ENCODE measurements at regions of chr1 and their contacts with region 1.

Region 1: GRCh38 chr1:47725992-47726855 is 271.0 kb downstream of the TRABD2B start:
- DNase-seq: peak; percentile 34
- H3K4me3 Mint-ChIP-seq: no peak overlapping the region
- H3K27ac Mint-ChIP-seq: no peak overlapping the region
- H3K4me1 Mint-ChIP-seq: peaks cover 5% of the 10 kb centered on the region
- H3K27me3 Mint-ChIP-seq: peaks cover 46% of the 10 kb centered on the region

Region 2: DNA sequence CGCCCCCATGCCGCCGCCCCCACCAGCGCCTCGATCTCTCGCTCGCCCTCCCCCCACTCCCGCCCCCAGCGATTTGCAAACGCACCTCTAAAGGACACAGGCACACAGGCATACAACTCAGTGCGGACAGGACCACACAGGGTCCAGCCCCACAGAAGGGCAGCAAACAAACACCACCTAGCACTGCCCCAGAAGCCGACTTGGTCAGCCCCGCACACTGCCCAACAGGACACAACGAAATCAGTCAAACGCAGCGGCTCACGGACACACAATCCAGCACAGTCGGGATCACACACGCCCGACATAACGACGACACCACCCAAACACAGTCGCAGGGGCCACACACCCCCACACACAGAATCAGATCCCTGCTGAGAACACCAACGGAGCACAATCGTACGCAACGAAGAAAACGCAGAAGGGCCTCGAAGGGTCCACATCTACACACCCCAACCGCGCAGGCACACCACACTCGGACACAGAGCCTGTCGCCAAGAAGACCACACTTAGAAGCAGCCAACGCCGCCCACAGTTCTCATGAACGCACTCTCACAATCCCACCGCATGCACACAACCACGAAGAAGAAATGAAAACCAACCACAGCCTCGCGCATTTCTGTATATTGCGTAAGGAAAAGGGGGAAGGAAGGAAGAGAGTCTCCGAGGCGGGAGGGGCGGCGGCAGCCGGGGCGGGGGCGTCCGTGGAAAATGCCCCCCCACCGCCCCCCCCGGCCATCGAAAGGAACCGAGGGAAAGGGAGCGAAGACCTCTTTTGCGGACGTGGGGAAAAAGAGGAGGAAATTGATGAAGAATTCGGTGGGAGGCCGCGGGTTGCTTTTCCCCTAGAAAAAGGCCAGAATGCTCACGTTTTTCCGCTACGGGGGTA is 494.7 kb before region 1 on chr1:
- intact Hi-C with region 1: loop called (anchors 5 kb)
- DNase-seq: no peak
- H3K4me3 Mint-ChIP-seq: peak overlapping the region; percentile 73
- H3K27ac Mint-ChIP-seq: peak overlapping the region; percentile 86
- H3K4me1 Mint-ChIP-seq: peaks cover 14% of the 10 kb centered on the region
- H3K27me3 Mint-ChIP-seq: peaks cover 87% of the 10 kb centered on the region

Region 3: DNA sequence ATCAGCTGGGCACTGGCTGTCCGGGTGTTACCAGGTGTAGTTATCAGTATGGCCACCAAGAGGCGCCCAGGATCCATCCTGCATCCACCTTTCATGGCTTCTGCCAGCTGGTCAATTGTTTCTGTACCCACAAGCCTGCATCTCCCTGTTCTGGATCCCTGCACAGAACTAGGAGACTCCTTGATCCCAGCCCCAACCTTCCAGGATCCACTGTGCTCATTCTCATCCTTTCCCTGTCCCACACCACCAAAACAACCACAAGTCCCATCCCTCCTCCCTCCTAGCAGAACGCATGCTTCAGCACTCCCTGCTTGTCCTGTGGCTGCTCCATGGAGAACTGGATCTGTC is 337.4 kb before region 1 on chr1:
- intact Hi-C with region 1: loop called (anchors 1 kb)
- DNase-seq: peak; percentile 22
- H3K4me3 Mint-ChIP-seq: no peak overlapping the region
- H3K27ac Mint-ChIP-seq: no peak overlapping the region
- H3K4me1 Mint-ChIP-seq: no peaks in the 10 kb centered on the region
- H3K27me3 Mint-ChIP-seq: peaks cover 22% of the 10 kb centered on the region

Region 4: DNA sequence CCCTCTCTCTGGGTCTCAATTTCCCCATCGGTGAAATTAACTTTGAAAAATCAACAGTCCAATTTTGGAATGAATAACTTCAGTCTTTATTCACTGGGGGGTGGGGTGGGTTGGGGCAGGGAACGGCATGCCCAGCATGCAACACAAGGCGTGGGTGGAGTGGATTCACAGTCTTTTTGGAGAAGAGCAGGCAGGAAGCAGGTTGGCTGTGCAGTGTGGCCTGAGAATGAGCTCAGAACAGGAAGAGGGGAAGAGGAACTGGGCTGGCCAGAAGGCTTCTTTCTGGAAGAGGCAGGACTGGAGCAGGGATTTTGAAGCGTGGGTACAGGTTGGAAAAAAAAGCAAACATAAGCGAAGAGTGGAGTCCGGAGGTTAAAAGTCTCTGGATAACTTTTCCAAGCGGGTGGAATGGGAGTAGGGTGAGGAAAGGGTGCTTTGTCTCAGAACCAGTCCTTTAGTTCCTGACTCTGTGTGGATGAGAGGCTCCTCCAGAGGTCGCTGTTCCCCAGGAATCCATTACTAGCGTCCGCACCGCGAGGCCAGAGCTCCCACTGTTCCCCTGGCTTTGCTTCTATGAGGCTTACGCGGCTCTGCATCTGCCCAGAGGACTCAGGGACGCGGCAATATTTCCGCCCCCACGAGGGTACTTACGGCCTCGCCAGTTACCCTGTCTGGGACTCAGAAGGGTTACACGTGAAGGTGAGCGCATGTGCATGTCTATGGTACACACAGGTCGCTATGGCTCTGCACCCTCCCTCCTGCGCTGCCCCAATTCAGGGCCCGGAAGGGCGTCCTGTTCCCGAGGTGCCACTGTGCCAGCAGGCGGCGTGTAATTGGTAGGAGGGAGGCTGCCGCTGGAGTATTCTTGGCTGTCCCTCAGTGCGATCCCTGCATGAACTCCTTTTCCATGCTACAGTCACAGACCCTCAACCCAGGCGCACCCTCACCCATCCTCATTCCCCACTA is 293.9 kb before region 1 on chr1:
- intact Hi-C with region 1: loop called (anchors 1 kb)
- DNase-seq: peak; percentile 28
- H3K4me3 Mint-ChIP-seq: no peak overlapping the region
- H3K27ac Mint-ChIP-seq: no peak overlapping the region
- H3K4me1 Mint-ChIP-seq: peaks cover 34% of the 10 kb centered on the region
- H3K27me3 Mint-ChIP-seq: peaks cover 36% of the 10 kb centered on the region

Region 5: DNA sequence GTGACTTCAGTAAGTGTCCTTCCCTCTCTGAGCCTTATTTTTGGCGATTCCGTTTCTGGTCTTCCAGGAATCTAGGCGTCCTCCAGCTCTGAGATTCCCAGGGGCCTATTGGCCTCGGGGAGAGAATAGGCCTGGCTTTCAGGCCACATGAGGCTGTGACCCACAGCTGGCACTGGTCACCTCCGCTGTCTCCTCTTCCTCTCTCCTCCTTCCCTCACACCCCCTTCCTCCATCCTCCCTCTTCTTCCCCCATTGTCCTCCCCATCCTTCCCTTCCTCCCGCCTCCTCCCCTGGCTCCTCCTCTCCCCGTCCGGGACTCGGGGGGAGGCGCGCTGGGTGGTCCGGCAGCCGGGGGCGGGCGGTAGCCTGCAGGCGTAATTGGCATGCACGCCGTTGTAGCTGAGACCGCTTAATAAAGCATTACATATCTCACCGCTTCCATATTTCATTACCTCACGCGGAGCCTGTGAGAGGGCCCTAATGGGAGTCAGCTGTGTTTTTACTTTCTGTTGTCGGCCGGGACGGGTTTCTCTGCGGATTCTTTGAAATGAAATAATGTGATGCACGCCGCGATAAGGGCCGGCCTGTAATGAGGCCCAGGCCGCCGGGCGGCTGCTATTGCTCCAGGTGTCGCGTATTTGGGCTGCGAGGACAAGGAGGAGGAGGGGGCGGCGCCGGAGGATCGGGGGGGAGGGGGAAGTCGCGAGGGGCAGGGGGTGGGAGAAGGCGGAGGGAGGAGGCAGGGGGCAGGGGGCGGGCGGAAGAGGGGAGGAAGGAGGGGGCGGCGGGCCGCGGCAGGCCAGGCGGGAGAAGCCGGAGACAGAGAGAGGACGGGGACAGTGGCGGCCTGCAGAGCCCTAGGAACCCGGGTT is 193.1 kb before region 1 on chr1:
- intact Hi-C with region 1: loop called (anchors 5 kb)
- DNase-seq: no peak
- H3K4me3 Mint-ChIP-seq: no peak overlapping the region
- H3K27ac Mint-ChIP-seq: no peak overlapping the region
- H3K4me1 Mint-ChIP-seq: no peaks in the 10 kb centered on the region
- H3K27me3 Mint-ChIP-seq: peaks cover 50% of the 10 kb centered on the region

Region 6: DNA sequence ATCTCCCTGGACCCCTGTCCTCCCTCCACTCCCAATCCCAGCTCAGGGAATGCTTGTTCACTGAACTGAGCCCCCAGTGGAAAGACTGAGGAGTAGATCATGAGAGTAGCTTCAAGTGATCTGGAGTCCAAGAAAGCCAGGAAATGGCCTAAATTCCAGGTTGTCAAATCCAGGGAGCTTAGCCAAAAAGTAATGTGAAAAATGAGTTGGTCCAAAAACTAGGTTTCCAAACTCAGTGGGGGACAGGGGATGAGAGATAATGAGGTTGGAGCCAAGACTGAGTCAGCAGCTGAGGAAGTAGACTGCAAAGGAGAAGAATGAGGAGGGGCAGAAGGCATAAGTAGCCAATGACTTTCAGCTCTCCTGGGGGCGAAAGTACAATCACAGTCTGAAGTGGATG is 1334.5 kb after region 1 on chr1:
- intact Hi-C with region 1: no loop called
- DNase-seq: no peak
- H3K4me3 Mint-ChIP-seq: no peak overlapping the region
- H3K27ac Mint-ChIP-seq: no peak overlapping the region
- H3K4me1 Mint-ChIP-seq: no peaks in the 10 kb centered on the region
- H3K27me3 Mint-ChIP-seq: no peaks in the 10 kb centered on the region